T-cell (primary cell): ENCODE measurements at regions of chr4 and their contacts with region 1.

Region 1: DNA sequence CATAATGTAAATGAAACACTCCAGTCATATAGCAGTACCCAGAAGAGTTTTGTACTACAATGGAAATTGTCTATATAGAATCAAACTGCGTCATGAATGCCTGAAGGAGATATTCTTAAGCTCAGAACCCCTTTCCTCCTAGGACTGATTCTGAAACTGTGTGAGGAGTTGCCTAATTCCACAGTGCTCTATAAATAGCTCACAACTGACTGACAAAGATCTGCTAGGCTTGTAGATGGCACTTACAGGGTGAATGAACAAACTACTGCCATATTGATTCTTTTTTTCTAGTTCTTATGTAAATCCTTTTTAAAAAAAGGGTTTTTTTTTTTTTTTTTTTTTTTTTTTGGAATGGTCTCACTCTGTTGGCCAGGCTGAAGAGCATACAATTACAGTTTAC is 30.1 kb upstream of the UGT2B17 start:
- DNase-seq: no peak
- ATAC-seq: no peak
- H3K4me3 ChIP-seq: no peak overlapping the region
- H3K4me3 Mint-ChIP-seq: no peak overlapping the region
- H3K27ac ChIP-seq: no peak overlapping the region
- H3K27ac Mint-ChIP-seq: no peak overlapping the region
- H3K4me1 ChIP-seq: no peaks in the 10 kb centered on the region
- H3K4me1 Mint-ChIP-seq: no peaks in the 10 kb centered on the region
- H3K27me3 ChIP-seq: no peaks in the 10 kb centered on the region
- H3K27me3 Mint-ChIP-seq: peaks cover 0 to 4% of the 10 kb centered on the region in 2 donors

Region 2: GRCh38 chr4:68476191-68476590 is 130.0 kb before region 1 on chr4:
- CTCF ChIA-PET with region 1: no interaction called
- POLR2A ChIA-PET with region 1: interaction called in 1 of 2 experiments, 10 read pairs
- DNase-seq: no peak
- ATAC-seq: no peak
- H3K4me3 ChIP-seq: no peak overlapping the region
- H3K4me3 Mint-ChIP-seq: no peak overlapping the region
- H3K27ac ChIP-seq: no peak overlapping the region
- H3K27ac Mint-ChIP-seq: no peak overlapping the region
- H3K4me1 ChIP-seq: no peaks in the 10 kb centered on the region
- H3K4me1 Mint-ChIP-seq: peaks cover 0 to 2% (median 0%) of the 10 kb centered on the region in 3 donors
- H3K27me3 ChIP-seq: no peaks in the 10 kb centered on the region
- H3K27me3 Mint-ChIP-seq: no peaks in the 10 kb centered on the region

Region 3: DNA sequence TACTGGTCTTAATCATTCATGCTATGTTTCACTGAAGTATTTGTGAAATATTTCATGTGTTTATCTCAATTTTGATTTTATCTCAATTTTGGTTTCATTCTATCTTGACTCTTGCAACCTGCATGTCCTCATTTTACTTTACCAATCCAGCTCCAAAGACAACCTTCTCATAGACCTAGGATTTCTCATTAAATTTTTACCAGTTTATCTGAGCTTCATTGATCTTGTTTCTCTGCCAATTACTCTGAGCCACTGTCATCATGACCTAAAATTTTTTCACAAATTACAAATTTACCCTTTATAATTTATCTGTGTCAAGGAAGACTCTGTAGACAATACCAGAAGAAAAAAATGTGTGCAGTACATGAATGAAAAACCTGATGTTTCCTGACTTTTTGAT is 11.6 kb before region 1 on chr4:
- CTCF ChIA-PET with region 1: no interaction called
- POLR2A ChIA-PET with region 1: no interaction called
- DNase-seq: no peak
- ATAC-seq: no peak
- H3K4me3 ChIP-seq: no peak overlapping the region
- H3K4me3 Mint-ChIP-seq: no peak overlapping the region
- H3K27ac ChIP-seq: no peak overlapping the region
- H3K27ac Mint-ChIP-seq: no peak overlapping the region
- H3K4me1 ChIP-seq: no peaks in the 10 kb centered on the region
- H3K4me1 Mint-ChIP-seq: no peaks in the 10 kb centered on the region
- H3K27me3 ChIP-seq: no peaks in the 10 kb centered on the region
- H3K27me3 Mint-ChIP-seq: no peaks in the 10 kb centered on the region